ENCODE measurements at regions of chr5 and their contacts with region 1.

Region 1: GRCh38 chr5:45038366-45038987 is 229.7 kb downstream of the MRPS30 start:
- DNase-seq: no peak
- ATAC-seq: no peak
- H3K4me3 Mint-ChIP-seq: no peak overlapping the region
- H3K27ac Mint-ChIP-seq: no peak overlapping the region
- H3K4me1 Mint-ChIP-seq: no peaks in the 10 kb centered on the region
- H3K27me3 Mint-ChIP-seq: no peaks in the 10 kb centered on the region

Region 2: DNA sequence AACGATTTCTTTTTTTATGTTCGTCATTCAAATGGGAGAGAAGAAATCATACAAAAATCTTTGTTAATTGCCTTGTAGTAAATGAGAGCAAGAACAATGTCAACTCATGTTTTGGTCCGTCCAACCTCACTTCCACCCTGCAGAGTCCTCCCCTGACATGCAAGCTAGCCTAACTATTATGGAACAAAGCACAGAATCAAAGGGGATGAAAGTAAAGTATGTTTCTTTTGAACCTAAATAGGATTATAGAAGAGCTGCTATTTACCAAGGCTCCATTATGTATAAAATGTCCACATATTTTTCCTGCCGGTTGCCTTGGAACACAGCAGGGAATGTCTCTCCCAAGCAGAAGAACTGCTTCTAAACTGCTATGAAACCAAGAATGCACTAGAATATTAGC is 68.7 kb before region 1 on chr5:
- CTCF ChIA-PET with region 1: no interaction called
- POLR2A ChIA-PET with region 1: no interaction called
- intact Hi-C with region 1: no loop called
- DNase-seq: no peak
- ATAC-seq: no peak
- H3K4me3 Mint-ChIP-seq: no peak overlapping the region
- H3K27ac Mint-ChIP-seq: no peak overlapping the region
- H3K4me1 Mint-ChIP-seq: no peaks in the 10 kb centered on the region
- H3K27me3 Mint-ChIP-seq: no peaks in the 10 kb centered on the region

Region 3: GRCh38 chr5:45696206-45696836 is 657.8 kb after region 1 on chr5 and contains the start of gene HCN1:
- CTCF ChIA-PET with region 1: interaction called, 3 read pairs
- POLR2A ChIA-PET with region 1: no interaction called
- intact Hi-C with region 1: loop called in 1 of 2 experiments (anchors 2 kb)
- DNase-seq: peak; percentile 75
- ATAC-seq: peak; percentile 91
- H3K4me3 Mint-ChIP-seq: no peak within 1 kb of the TSS
- H3K27ac Mint-ChIP-seq: no peak within 1 kb of the TSS
- H3K4me1 Mint-ChIP-seq: peaks cover 2% of the 10 kb centered on the region
- H3K27me3 Mint-ChIP-seq: peaks cover 20% of the 10 kb centered on the region
- total RNA-seq, gene HCN1: not detected

Measured in activated CD4-positive, alpha-beta T cell treated with anti-CD3 and anti-CD28 coated beads for 36 hours (primary cell).